Naive thymus-derived CD4-positive, alpha-beta T cell (primary cell): ENCODE measurements at regions of chr7 and their contacts with region 1.

Region 1: GRCh38 chr7:50164559-50165170 is 71.6 kb upstream of the ZPBP start:
- DNase-seq: peak in 6 of 9 donors; percentile 18 to 41 (median 35)
- ATAC-seq: peak; percentile 67
- H3K4me3 ChIP-seq: peak overlapping the region; percentile 19
- H3K4me3 Mint-ChIP-seq: peak overlapping the region; percentile 31 to 83 (median 73)
- H3K27ac ChIP-seq: no peak overlapping the region
- H3K27ac Mint-ChIP-seq: peak overlapping the region; percentile 67 to 92 (median 78)
- H3K4me1 ChIP-seq: peaks cover 34 to 37% of the 10 kb centered on the region in 2 donors
- H3K4me1 Mint-ChIP-seq: peaks cover 31 to 61% (median 53%) of the 10 kb centered on the region in 7 donors
- H3K27me3 ChIP-seq: no peaks in the 10 kb centered on the region
- H3K27me3 Mint-ChIP-seq: peaks cover 0 to 2% (median 0%) of the 10 kb centered on the region in 5 donors

Region 2: DNA sequence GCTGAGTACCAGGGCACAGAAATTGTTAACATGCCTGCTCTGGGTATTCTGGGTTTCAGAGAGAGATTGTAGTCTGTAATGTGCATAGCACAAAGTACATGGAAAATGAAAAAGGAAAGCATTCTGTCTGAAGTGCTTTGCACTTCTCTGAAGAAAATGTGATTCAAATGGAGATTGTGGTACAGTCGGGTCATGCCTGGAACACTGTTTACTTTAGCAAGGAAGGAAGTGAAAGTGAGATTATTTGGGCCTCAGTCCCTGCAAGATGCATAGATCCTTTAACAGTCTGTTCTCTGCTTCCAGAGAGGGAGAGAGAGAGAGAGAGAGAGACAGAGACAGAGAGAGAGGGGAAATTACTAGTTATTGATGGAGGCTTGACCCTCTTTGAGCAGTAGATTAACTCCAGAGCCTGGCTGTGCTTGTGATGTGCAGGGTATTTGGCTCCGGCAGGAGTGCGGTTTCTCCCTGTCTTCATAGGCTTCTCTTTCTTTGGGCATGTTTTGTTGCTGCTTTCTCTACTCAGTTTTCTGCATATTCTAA is 385.9 kb before region 1 on chr7:
- CTCF ChIA-PET with region 1: no interaction called
- POLR2A ChIA-PET with region 1: no interaction called
- intact Hi-C with region 1: no loop called
- DNase-seq: no peak
- ATAC-seq: no peak
- H3K4me3 ChIP-seq: no peak overlapping the region
- H3K4me3 Mint-ChIP-seq: no peak overlapping the region
- H3K27ac ChIP-seq: no peak overlapping the region
- H3K27ac Mint-ChIP-seq: no peak overlapping the region
- H3K4me1 ChIP-seq: no peaks in the 10 kb centered on the region
- H3K4me1 Mint-ChIP-seq: peaks cover 0 to 5% (median 3%) of the 10 kb centered on the region in 7 donors
- H3K27me3 ChIP-seq: no peaks in the 10 kb centered on the region
- H3K27me3 Mint-ChIP-seq: peaks cover 24 to 61% (median 45%) of the 10 kb centered on the region in 5 donors

Region 3: DNA sequence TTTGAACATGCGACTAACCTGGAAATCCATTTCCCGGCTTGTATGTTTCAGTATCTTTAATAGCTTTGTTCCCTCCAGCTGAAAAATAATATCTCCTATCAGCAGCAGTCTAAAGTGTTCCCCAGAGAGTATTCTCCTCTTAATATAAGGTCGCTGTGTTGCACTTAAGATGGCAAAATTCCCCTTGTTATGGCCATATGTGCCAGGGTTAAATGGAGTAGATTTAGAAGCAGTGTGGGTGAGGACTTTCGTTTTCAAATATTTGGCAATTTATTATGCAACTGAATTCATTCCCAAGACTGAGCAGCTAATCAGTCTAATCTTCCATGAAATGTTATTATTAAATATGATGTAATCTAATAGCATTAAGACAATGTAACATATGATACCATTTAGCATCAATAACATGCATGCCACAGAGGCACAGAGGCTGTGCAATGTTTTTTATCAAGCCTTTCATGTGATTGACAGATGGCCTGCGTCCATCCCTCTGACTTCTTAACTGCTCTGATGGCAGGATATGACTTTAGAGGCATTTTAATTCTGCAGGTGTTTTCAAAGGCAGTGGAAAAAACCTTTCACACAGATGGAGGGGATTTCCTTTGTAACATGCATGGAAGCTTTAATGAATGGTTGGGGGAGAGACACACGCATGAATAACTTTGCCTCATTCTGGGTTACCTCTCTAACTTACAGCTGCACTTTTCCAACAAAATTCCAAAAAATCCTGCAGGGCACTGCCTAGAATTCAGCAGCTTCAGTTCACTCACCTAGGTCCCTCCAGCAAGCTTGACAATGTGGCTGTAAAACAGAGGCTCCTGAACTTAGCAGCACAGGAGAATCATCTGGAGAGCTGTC is 16.5 kb before region 1 on chr7:
- CTCF ChIA-PET with region 1: interaction called, 6 read pairs
- POLR2A ChIA-PET with region 1: interaction called, 5 read pairs
- intact Hi-C with region 1: loop called (anchors 1 to 2 kb)
- DNase-seq: peak in 7 of 9 donors; percentile 52 to 83 (median 71)
- ATAC-seq: peak; percentile 91
- H3K4me3 ChIP-seq: no peak overlapping the region
- H3K4me3 Mint-ChIP-seq: peak overlapping the region in 8 of 10 donors; percentile 21 to 60 (median 48)
- H3K27ac ChIP-seq: peak overlapping the region; percentile 72
- H3K27ac Mint-ChIP-seq: peak overlapping the region; percentile 57 to 97 (median 87)
- H3K4me1 ChIP-seq: peaks cover 3 to 14% of the 10 kb centered on the region in 2 donors
- H3K4me1 Mint-ChIP-seq: peaks cover 18 to 63% (median 40%) of the 10 kb centered on the region in 7 donors
- H3K27me3 ChIP-seq: no peaks in the 10 kb centered on the region
- H3K27me3 Mint-ChIP-seq: no peaks in the 10 kb centered on the region